ENCODE measurements at regions of chr19 and their contacts with region 1.

Region 1: GRCh38 chr19:36605101-36605876 is at the start of gene ZNF382:
- DNase-seq: peak; percentile 17
- ATAC-seq: peak; percentile 94
- H3K4me3 ChIP-seq: peak within 1 kb of the TSS; percentile 88
- H3K27ac ChIP-seq: peak within 1 kb of the TSS; percentile 70
- H3K4me1 ChIP-seq: no peaks in the 10 kb centered on the region
- H3K27me3 ChIP-seq: no peaks in the 10 kb centered on the region
- CTCF ChIP-seq: no peak
- EP300 ChIP-seq: no peak
- POLR2A ChIP-seq: peak; percentile 83
- RAD21 ChIP-seq: no peak
- polyA plus RNA-seq, gene ZNF382: 0.02 to 0.61 TPM

Region 2: DNA sequence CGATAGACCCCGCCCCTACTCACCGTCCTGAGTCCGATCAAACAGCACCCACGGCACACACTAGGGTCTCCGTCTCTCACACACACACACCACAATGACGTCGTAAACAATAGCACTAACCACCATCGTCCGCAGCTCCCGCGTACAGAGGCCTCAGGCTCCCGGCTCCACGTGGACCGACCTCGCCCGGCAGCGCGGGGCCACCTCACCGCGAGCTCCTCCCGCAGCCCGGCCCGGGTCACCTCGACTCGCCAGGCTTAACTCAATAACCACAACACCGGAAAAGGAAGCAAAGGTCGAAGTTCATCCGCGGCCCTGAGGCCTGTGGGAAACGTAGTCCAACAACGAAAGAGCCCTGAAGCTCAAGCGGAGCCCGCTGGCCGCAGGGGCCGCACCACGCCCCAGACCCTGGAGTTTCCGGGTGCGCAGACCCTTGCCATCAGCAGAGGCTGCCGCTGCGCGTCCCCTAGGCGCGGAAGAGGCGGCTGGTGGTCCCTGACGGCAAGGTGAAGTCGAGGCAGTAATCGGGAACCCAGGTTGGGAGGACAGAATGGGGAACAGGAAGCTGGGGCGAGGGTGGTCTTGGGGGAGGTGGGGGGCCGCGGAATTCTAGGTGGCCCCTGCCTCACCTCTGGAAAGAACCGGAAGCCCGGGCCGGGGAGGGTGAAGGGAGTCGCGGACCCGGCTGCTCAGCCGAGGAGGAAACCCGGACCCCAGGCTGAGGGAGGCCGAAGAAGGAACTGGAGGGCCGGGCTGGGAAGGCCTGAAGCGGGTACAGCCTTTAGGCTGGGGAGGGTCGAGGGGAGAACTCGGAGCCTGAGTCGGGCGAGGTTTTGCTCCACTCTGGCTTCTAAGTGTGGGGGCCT is 32.0 kb before region 1 on chr19 and contains the start of gene ZNF529:
- CTCF ChIA-PET with region 1: interaction called, 3 read pairs
- POLR2A ChIA-PET with region 1: interaction called, 3 read pairs
- RAD21 ChIA-PET with region 1: interaction called, 13 read pairs
- SMC1A ChIA-PET with region 1: interaction called, 5 read pairs
- in situ Hi-C with region 1: no loop called
- intact Hi-C with region 1: no loop called
- DNase-seq: peak; percentile 74
- ATAC-seq: peak; percentile 97
- H3K4me3 ChIP-seq: peak within 1 kb of the TSS; percentile 91
- H3K27ac ChIP-seq: peak within 1 kb of the TSS; percentile 87
- H3K4me1 ChIP-seq: no peaks in the 10 kb centered on the region
- H3K27me3 ChIP-seq: no peaks in the 10 kb centered on the region
- CTCF ChIP-seq: no peak
- EP300 ChIP-seq: no peak
- POLR2A ChIP-seq: peak; percentile 96
- RAD21 ChIP-seq: no peak
- polyA plus RNA-seq, gene ZNF529: 1.8 to 2.7 TPM

Region 3: GRCh38 chr19:36672368-36672767 is 67.1 kb after region 1 on chr19:
- CTCF ChIA-PET with region 1: no interaction called
- POLR2A ChIA-PET with region 1: no interaction called
- RAD21 ChIA-PET with region 1: no interaction called
- SMC1A ChIA-PET with region 1: no interaction called
- in situ Hi-C with region 1: no loop called
- intact Hi-C with region 1: no loop called
- DNase-seq: no peak
- ATAC-seq: no peak
- H3K4me3 ChIP-seq: no peak overlapping the region
- H3K27ac ChIP-seq: no peak overlapping the region
- H3K4me1 ChIP-seq: no peaks in the 10 kb centered on the region; the same call in 1 of the 2 replicates
- H3K27me3 ChIP-seq: no peaks in the 10 kb centered on the region
- CTCF ChIP-seq: no peak
- EP300 ChIP-seq: no peak
- POLR2A ChIP-seq: no peak
- RAD21 ChIP-seq: no peak